Adrenal gland (tissue), 19 donors: ENCODE measurements at regions of chr6 and their contacts with region 1.

Region 1: GRCh38 chr6:5214570-5215052 is 46.1 kb downstream of the LYRM4 start:
- DNase-seq: peak; percentile 46 to 81 (median 69)
- H3K4me3 ChIP-seq: no peak overlapping the region
- H3K27ac ChIP-seq: peak overlapping the region in 1 of 5 donors; percentile 25
- H3K4me1 ChIP-seq: no peaks in the 10 kb centered on the region
- H3K27me3 ChIP-seq: no peaks in the 10 kb centered on the region
- CTCF ChIP-seq: peak; percentile 72 to 89 (median 80)
- POLR2A ChIP-seq: no peak

Region 2: DNA sequence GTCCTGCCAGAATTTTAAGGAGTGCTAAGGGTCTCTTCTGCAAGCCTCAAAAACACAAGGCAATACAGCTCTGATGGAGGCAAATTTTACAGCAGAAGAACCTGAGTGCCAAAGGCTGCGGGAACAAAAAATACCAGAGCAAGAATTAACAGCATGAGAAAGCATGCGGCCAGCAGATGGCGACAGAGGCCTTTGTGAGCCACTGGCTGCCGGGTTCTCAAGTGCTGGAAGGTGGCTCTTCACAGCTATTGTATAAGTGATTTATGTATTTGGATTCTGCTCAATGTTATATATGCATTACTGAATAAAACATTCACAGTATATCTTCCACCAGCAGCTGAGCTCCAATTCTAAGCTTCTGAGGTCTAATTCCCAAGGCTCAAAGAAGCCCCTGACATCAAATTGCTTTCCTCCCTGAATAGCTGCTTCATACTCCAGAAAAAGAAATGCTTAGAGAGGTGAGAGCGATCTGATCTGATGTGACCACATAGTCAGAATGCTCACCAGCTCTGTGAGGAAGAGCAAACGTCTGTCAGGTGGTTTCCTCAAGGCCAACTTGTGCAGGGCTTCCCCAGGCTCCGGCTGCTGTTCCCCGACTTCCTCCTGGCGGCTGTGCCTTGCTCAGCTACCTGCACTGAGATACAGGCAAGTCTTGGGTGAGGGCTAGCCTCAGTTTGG is 70.8 kb before region 1 on chr6:
- intact Hi-C with region 1: loop called (anchors 10 kb)
- DNase-seq: peak; percentile 76 to 97 (median 90)
- H3K4me3 ChIP-seq: no peak overlapping the region
- H3K27ac ChIP-seq: no peak overlapping the region
- H3K4me1 ChIP-seq: peaks cover 0 to 4% of the 10 kb centered on the region in 2 donors
- H3K27me3 ChIP-seq: no peaks in the 10 kb centered on the region
- CTCF ChIP-seq: peak; percentile 87 to 95 (median 92)
- POLR2A ChIP-seq: no peak

Region 3: DNA sequence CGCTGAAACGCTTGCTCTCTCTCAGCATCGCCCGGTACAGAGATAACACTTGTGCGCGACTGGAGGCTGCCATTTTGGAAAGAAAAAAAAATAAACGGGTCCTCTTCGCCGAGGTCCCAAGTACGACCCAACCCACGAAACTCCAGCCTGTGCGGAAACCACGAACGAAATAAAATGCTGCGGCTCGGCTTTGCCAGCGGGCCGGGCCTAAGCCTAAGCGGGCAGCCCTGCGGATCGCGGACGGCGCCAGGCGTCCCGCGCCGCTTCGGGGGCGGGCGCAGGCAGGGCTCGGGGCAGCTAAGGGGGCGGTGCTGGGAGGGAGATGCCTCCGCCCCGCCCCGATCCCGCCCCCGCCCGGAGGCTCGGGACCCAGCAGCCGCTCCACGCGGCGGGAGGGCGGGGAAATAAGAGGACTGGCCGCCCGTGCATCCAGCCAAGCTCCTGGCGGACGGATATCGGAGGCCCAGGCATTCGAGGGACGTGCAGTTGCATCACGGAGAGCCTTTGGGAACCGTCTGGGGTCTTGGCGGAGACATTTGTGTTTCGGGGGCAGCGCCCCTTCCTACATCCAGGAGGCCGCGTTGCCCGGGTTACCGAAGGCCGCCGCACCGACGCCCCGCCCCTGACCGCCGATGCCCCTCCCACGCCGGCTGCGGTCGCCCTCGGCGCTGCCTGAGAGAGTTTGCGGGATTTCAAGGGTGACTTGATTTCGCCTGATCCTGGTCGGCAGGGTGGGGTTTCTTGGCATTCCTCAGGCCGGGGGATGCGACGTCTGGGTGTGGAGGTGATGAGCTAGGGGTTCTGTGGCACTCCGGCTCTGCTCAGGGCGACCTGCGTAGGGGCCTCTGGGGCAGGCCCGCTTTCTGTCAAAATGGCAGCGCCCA is 46.3 kb after region 1 on chr6 and contains the starts of genes FARS2 and LYRM4:
- intact Hi-C with region 1: loop called in 1 of 2 experiments (anchors 10 kb)
- DNase-seq: peak; percentile 79 to 93 (median 91)
- H3K4me3 ChIP-seq: peak within 1 kb of the TSS; percentile 79 to 95 (median 80)
- H3K27ac ChIP-seq: peak within 1 kb of the TSS; percentile 93 to 99 (median 97)
- H3K4me1 ChIP-seq: peaks cover 8 to 19% of the 10 kb centered on the region in 2 donors
- H3K27me3 ChIP-seq: no peaks in the 10 kb centered on the region
- CTCF ChIP-seq: peak in 3 of 6 experiments; percentile 12 to 65 (median 55)
- POLR2A ChIP-seq: peak; percentile 37 to 65
- total RNA-seq, gene FARS2: 18.3 to 55.2 (median 20.0) TPM
- total RNA-seq, gene LYRM4: 24.5 to 65.1 (median 31.9) TPM

Region 4: GRCh38 chr6:5302995-5303622 is 88.5 kb after region 1 on chr6:
- intact Hi-C with region 1: loop called in 1 of 2 experiments (anchors 10 kb)
- DNase-seq: peak in 6 of 7 donors; percentile 31 to 69 (median 44)
- H3K4me3 ChIP-seq: no peak overlapping the region
- H3K27ac ChIP-seq: no peak overlapping the region
- H3K4me1 ChIP-seq: no peaks in the 10 kb centered on the region
- H3K27me3 ChIP-seq: no peaks in the 10 kb centered on the region
- CTCF ChIP-seq: peak in 4 of 6 experiments; percentile 35 to 42 (median 40)
- POLR2A ChIP-seq: no peak

Region 5: GRCh38 chr6:5337573-5337972 is 123.0 kb after region 1 on chr6:
- intact Hi-C with region 1: no loop called
- DNase-seq: no peak
- H3K4me3 ChIP-seq: no peak overlapping the region
- H3K27ac ChIP-seq: no peak overlapping the region
- H3K4me1 ChIP-seq: peaks cover 4 to 7% of the 10 kb centered on the region in 2 donors
- H3K27me3 ChIP-seq: no peaks in the 10 kb centered on the region
- CTCF ChIP-seq: no peak
- POLR2A ChIP-seq: no peak

Region 6: DNA sequence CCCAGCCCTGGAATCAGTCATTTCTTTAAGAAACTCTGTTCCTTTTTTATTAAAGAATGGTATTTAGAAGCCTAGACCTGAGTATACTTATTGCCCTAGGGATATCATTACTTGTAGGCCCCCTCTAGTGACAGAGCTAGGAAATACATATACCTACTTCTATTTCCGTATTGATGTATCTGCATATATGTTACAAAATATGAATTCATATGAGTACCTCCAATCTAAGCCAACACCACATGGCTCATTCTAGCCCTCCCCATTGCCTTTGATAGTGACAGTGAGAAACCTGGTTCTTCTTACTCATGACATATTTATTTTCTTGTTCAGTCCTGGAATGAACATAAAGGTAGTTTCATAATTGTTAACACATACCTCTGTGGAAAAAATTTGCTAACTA is 183.9 kb after region 1 on chr6:
- intact Hi-C with region 1: loop called in 1 of 2 experiments (anchors 10 kb)
- DNase-seq: no peak
- H3K4me3 ChIP-seq: no peak overlapping the region
- H3K27ac ChIP-seq: no peak overlapping the region
- H3K4me1 ChIP-seq: no peaks in the 10 kb centered on the region
- H3K27me3 ChIP-seq: no peaks in the 10 kb centered on the region
- CTCF ChIP-seq: peak; percentile 14 to 52 (median 34)
- POLR2A ChIP-seq: no peak